MCF 10A (cell line): ENCODE measurements at regions of chr3 and their contacts with region 1.

Region 1: GRCh38 chr3:139427283-139427993 is 38.0 kb upstream of the COPB2 start:
- DNase-seq: peak; percentile 82
- H3K4me3 Mint-ChIP-seq: no peak overlapping the region
- H3K27ac Mint-ChIP-seq: no peak overlapping the region
- H3K4me1 Mint-ChIP-seq: peaks cover 6% of the 10 kb centered on the region
- H3K27me3 Mint-ChIP-seq: no peaks in the 10 kb centered on the region
- CTCF ChIP-seq: peak; percentile 83

Region 2: GRCh38 chr3:139251529-139251928 is 175.9 kb before region 1 on chr3:
- CTCF ChIA-PET with region 1: no interaction called
- POLR2A ChIA-PET with region 1: no interaction called
- intact Hi-C with region 1: no loop called
- DNase-seq: peak; percentile 6
- H3K4me3 Mint-ChIP-seq: no peak overlapping the region
- H3K27ac Mint-ChIP-seq: no peak overlapping the region
- H3K4me1 Mint-ChIP-seq: no peaks in the 10 kb centered on the region
- H3K27me3 Mint-ChIP-seq: peaks cover 22% of the 10 kb centered on the region
- CTCF ChIP-seq: no peak

Region 3: GRCh38 chr3:139448104-139448503 is 20.7 kb after region 1 on chr3:
- CTCF ChIA-PET with region 1: interaction called, 19 read pairs
- POLR2A ChIA-PET with region 1: no interaction called
- intact Hi-C with region 1: no loop called
- DNase-seq: peak; percentile 36
- H3K4me3 Mint-ChIP-seq: no peak overlapping the region
- H3K27ac Mint-ChIP-seq: no peak overlapping the region
- H3K4me1 Mint-ChIP-seq: no peaks in the 10 kb centered on the region
- H3K27me3 Mint-ChIP-seq: no peaks in the 10 kb centered on the region
- CTCF ChIP-seq: no peak

Region 4: GRCh38 chr3:139533781-139534443 is 106.5 kb after region 1 on chr3:
- CTCF ChIA-PET with region 1: interaction called, 21 read pairs
- POLR2A ChIA-PET with region 1: interaction called, 3 read pairs
- intact Hi-C with region 1: no loop called
- DNase-seq: peak; percentile 27
- H3K4me3 Mint-ChIP-seq: no peak overlapping the region
- H3K27ac Mint-ChIP-seq: peak overlapping the region; percentile 86
- H3K4me1 Mint-ChIP-seq: peaks cover 30% of the 10 kb centered on the region
- H3K27me3 Mint-ChIP-seq: no peaks in the 10 kb centered on the region
- CTCF ChIP-seq: no peak

Region 5: DNA sequence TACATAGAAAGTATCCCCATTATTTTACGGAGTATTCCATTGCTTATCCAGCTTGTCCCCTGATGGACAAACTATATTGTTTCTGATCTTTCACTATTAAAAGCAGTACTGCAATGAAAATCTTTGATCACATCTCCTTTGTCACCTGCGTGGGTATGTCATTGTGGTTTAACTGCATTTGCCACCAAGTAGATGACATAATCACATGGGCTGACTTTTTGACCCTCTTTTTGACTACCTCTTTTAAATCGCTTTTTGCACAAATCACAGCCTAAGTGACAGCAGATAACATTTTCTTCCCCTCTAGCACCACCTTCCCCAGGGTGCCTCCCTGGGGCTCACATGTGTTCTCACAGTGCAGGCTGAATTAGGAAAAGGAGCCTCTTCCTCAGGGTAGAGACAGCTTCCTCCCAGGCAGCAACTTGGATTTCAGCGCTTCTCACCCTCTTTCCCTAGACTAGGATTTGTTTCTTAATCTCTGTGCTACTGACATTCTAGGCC is 113.3 kb after region 1 on chr3:
- CTCF ChIA-PET with region 1: interaction called, 21 read pairs
- POLR2A ChIA-PET with region 1: no interaction called
- intact Hi-C with region 1: no loop called
- DNase-seq: no peak
- H3K4me3 Mint-ChIP-seq: no peak overlapping the region
- H3K27ac Mint-ChIP-seq: no peak overlapping the region
- H3K4me1 Mint-ChIP-seq: peaks cover 3% of the 10 kb centered on the region
- H3K27me3 Mint-ChIP-seq: no peaks in the 10 kb centered on the region
- CTCF ChIP-seq: no peak

Region 6: GRCh38 chr3:139629033-139629432 is 201.6 kb after region 1 on chr3:
- CTCF ChIA-PET with region 1: interaction called, 3 read pairs
- POLR2A ChIA-PET with region 1: no interaction called
- intact Hi-C with region 1: loop called (anchors 1 kb)
- DNase-seq: peak; percentile 71
- H3K4me3 Mint-ChIP-seq: no peak overlapping the region
- H3K27ac Mint-ChIP-seq: no peak overlapping the region
- H3K4me1 Mint-ChIP-seq: no peaks in the 10 kb centered on the region
- H3K27me3 Mint-ChIP-seq: no peaks in the 10 kb centered on the region
- CTCF ChIP-seq: no peak

Region 7: DNA sequence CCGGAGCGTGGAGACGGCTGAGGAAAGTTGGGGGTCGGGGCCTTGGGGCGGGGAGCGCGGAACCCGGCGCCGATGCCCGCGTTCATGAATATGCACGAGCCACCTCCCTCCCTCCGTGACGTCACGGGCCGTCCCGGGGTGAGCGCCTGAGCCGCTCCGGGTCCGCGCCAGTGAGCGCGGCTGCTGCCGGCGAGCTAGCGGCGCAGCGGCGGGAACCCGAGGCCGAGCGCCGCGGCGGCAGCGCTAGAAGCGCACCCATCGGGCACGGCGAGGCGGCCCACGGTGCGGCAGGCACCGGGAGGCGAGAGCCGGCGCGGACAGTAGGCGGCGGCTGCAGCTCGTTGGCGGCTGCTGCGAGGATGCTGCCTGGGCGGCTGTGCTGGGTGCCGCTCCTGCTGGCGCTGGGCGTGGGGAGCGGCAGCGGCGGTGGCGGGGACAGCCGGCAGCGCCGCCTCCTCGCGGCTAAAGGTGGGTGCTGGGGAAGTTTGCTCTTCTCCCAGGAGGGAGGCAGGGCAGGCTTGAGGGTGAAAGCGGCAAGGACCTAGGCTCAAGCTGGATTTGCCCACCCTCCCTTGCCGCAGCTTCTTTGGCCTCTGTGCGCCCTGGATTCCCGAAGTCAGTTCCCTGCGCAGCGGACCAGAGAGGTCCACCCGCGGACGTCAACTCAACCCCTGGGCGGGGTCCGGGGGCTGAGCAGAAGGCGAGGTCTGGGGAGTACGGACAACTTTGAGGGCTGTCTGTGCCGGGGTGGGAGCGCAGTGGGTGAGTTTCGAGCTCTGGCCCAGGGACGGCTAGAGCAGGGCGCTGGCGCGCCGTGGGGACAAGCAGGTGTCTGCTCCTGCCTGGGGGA is 507.8 kb after region 1 on chr3 and contains the start of gene CLSTN2:
- CTCF ChIA-PET with region 1: interaction called, 6 read pairs
- POLR2A ChIA-PET with region 1: no interaction called
- intact Hi-C with region 1: loop called (anchors 2 kb)
- DNase-seq: no peak
- H3K4me3 Mint-ChIP-seq: no peak within 1 kb of the TSS
- H3K27ac Mint-ChIP-seq: no peak within 1 kb of the TSS
- H3K4me1 Mint-ChIP-seq: no peaks in the 10 kb centered on the region
- H3K27me3 Mint-ChIP-seq: peaks cover 30% of the 10 kb centered on the region
- CTCF ChIP-seq: no peak
- total RNA-seq, gene CLSTN2: not detected in 2 replicates

Region 8: DNA sequence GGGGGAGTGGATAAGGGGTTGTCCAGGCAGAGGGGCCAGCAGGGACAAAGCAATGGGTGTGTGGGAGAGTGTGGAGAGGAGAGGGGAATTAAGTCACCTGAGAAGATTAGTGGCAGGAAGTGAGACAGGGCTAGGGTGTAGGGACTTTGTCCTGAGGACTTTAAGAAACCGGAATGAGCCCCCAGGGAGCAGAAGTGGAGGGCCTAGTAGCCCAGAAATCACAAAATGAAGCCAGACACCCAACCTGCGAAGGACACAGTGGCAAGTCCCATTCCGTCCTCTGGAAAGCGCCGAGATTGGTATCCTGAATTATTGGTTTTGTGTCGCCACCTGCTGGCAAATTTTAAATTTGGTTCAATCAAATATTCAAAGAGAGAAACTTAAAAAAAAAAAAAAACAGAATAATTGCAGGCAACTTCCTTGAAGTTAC is 1436.2 kb after region 1 on chr3:
- CTCF ChIA-PET with region 1: interaction called, 4 read pairs
- POLR2A ChIA-PET with region 1: no interaction called
- intact Hi-C with region 1: loop called (anchors 5 kb)
- DNase-seq: peak; percentile 69
- H3K4me3 Mint-ChIP-seq: no peak overlapping the region
- H3K27ac Mint-ChIP-seq: no peak overlapping the region
- H3K4me1 Mint-ChIP-seq: no peaks in the 10 kb centered on the region
- H3K27me3 Mint-ChIP-seq: peaks cover 25% of the 10 kb centered on the region
- CTCF ChIP-seq: peak; percentile 60